Panc1 (cell line): ENCODE measurements at regions of chr6 and their contacts with region 1.

Region 1: GRCh38 chr6:53986165-53986720 is 125.0 kb upstream of the MLIP start:
- DNase-seq: peak; percentile 39
- ATAC-seq: peak; percentile 76; the same call in 1 of the 2 replicates
- H3K4me3 ChIP-seq: no peak overlapping the region
- H3K27ac ChIP-seq: no peak overlapping the region
- H3K4me1 ChIP-seq: no peaks in the 10 kb centered on the region
- H3K27me3 ChIP-seq: 0 out of 2 replicates have a peak, but pooled peaks cover 4% of the 10 kb centered on the region
- CTCF ChIP-seq: peak; percentile 83; the same call in 1 of the 2 replicates

Region 2: GRCh38 chr6:53771785-53772624 is 214.2 kb before region 1 on chr6:
- CTCF ChIA-PET with region 1: no interaction called
- POLR2A ChIA-PET with region 1: no interaction called
- in situ Hi-C with region 1: no loop called
- intact Hi-C with region 1: no loop called
- DNase-seq: no peak
- ATAC-seq: no peak
- H3K4me3 ChIP-seq: no peak overlapping the region
- H3K27ac ChIP-seq: no peak overlapping the region
- H3K4me1 ChIP-seq: no peaks in the 10 kb centered on the region
- H3K27me3 ChIP-seq: no peaks in the 10 kb centered on the region
- CTCF ChIP-seq: no peak

Region 3: DNA sequence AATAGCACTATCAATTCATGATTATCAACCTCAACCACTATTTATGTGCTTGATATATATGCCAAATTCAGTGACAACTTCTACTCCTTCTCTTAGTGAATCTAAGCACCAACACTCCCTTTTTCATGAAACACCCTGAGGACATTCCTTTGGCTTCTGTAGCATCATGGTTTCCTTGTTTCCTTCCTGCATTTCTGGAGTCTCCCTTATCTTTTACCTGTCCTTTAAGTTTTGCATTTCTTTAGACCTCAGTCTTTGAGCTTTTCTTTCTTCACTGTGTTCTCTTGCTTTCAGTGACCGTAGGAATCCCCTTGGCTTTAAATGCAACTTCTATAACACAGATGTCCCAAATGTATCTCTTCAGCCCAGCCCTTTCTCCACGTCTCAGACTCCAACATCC is 18.8 kb before region 1 on chr6:
- CTCF ChIA-PET with region 1: no interaction called
- POLR2A ChIA-PET with region 1: no interaction called
- in situ Hi-C with region 1: no loop called
- intact Hi-C with region 1: no loop called
- DNase-seq: no peak
- ATAC-seq: no peak
- H3K4me3 ChIP-seq: no peak overlapping the region
- H3K27ac ChIP-seq: no peak overlapping the region
- H3K4me1 ChIP-seq: no peaks in the 10 kb centered on the region
- H3K27me3 ChIP-seq: peaks cover 4% of the 10 kb centered on the region; the same call in 1 of the 2 replicates
- CTCF ChIP-seq: no peak

Region 4: DNA sequence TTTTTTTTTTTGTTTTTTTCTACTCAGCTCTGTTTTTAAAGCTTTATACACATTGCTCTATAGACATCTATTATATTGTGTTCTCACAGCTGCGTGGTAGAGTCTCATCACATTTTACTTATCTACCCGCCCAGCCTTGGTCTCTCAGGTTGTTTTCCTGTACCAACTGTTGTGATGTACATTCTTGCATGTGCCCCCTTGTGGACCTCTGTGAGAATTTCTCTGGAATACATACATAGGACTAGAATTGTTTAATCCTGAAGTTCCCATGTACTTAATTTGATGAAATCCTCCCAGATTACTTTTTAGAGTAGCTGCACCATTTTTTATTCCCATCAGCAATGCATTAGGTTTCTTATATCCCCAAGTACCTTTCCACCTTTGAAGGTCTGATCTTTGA is 281.6 kb after region 1 on chr6:
- CTCF ChIA-PET with region 1: no interaction called
- POLR2A ChIA-PET with region 1: no interaction called
- in situ Hi-C with region 1: no loop called
- intact Hi-C with region 1: loop called (anchors 2 kb)
- DNase-seq: no peak
- ATAC-seq: no peak; the same call in 1 of the 2 replicates
- H3K4me3 ChIP-seq: no peak overlapping the region
- H3K27ac ChIP-seq: no peak overlapping the region
- H3K4me1 ChIP-seq: no peaks in the 10 kb centered on the region
- H3K27me3 ChIP-seq: no peaks in the 10 kb centered on the region; the same call in 1 of the 2 replicates
- CTCF ChIP-seq: peak; percentile 57; the same call in 1 of the 2 replicates

Region 5: GRCh38 chr6:54681987-54682386 is 695.7 kb after region 1 on chr6:
- CTCF ChIA-PET with region 1: no interaction called
- POLR2A ChIA-PET with region 1: no interaction called
- in situ Hi-C with region 1: no loop called
- intact Hi-C with region 1: loop called (anchors 10 kb)
- DNase-seq: peak; percentile 15
- ATAC-seq: no peak
- H3K4me3 ChIP-seq: no peak overlapping the region
- H3K27ac ChIP-seq: no peak overlapping the region
- H3K4me1 ChIP-seq: no peaks in the 10 kb centered on the region
- H3K27me3 ChIP-seq: no peaks in the 10 kb centered on the region
- CTCF ChIP-seq: no peak

Region 6: GRCh38 chr6:55069132-55069781 is 1083.0 kb after region 1 on chr6:
- CTCF ChIA-PET with region 1: no interaction called
- POLR2A ChIA-PET with region 1: no interaction called
- in situ Hi-C with region 1: no loop called
- intact Hi-C with region 1: loop called (anchors 5 kb)
- DNase-seq: peak; percentile 25
- ATAC-seq: no peak
- H3K4me3 ChIP-seq: no peak overlapping the region
- H3K27ac ChIP-seq: no peak overlapping the region
- H3K4me1 ChIP-seq: no peaks in the 10 kb centered on the region
- H3K27me3 ChIP-seq: no peaks in the 10 kb centered on the region
- CTCF ChIP-seq: peak; percentile 69